ENCODE measurements at regions of chr22 and their contacts with region 1.

Region 1: DNA sequence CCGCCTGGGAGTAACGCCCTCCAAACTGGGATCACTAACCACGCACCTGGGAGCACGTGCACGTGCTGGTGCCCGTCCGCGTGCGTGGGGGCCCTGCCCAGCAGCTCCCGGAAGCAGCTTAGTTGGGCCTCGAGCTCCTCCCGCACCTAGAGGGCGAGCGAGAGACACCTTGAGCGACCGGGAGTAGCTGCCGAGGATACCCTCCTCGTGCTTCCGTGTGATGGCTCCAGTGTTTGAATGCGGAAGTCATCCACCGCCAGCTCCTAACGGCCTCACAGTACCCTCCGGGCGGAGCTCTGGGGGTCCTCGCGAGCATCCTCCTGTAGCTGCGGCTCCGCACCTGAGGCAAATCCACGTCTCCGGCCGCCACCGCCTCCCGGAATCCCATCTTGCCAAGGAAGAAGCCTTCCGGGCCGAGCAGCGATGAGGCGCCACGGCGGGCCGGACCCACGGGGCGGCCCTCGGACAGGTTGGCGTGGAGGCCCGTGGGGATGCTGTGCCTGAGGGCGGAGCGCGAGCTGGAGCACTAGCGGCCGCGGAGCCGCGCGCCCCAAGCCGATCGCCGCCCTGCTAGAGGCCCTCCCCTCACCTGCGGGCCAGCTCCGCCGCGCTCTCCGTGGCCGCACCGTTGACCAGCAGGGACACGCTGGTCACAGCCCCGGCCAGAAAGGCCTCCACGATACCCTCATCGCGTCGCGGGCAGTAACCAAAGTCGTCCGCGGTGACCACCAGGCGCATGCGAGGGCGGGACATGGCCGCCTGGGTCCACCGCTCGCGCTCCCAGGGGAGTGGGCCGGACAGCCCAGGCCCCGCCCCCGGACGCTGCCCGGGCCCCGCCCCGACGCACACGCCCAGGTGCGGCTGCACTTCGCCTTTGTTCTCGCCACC is at the start of gene YDJC:
- DNase-seq: peak; percentile 95
- ATAC-seq: peak; percentile 85
- H3K4me3 Mint-ChIP-seq: peak within 1 kb of the TSS; percentile 91
- H3K27ac Mint-ChIP-seq: peak within 1 kb of the TSS; percentile 92
- H3K4me1 Mint-ChIP-seq: peaks cover 48% of the 10 kb centered on the region
- H3K27me3 Mint-ChIP-seq: no peaks in the 10 kb centered on the region
- CTCF ChIP-seq: peak; percentile 31
- total RNA-seq, gene YDJC: 46.1 and 51.4 TPM in 2 replicates

Region 2: GRCh38 chr22:21001560-21002325 is 627.8 kb before region 1 on chr22 and contains the start of gene THAP7:
- CTCF ChIA-PET with region 1: no interaction called
- POLR2A ChIA-PET with region 1: interaction called, 4 read pairs
- intact Hi-C with region 1: loop called (anchors 1 kb)
- DNase-seq: peak; percentile 97
- ATAC-seq: peak; percentile 88
- H3K4me3 Mint-ChIP-seq: peak within 1 kb of the TSS; percentile 93
- H3K27ac Mint-ChIP-seq: peak within 1 kb of the TSS; percentile 98
- H3K4me1 Mint-ChIP-seq: peaks cover 26% of the 10 kb centered on the region
- H3K27me3 Mint-ChIP-seq: no peaks in the 10 kb centered on the region
- CTCF ChIP-seq: no peak
- total RNA-seq, gene THAP7: 27.1 and 32.3 TPM in 2 replicates

Region 3: GRCh38 chr22:21587803-21588611 is 41.5 kb before region 1 on chr22:
- CTCF ChIA-PET with region 1: interaction called, 5 read pairs
- POLR2A ChIA-PET with region 1: interaction called, 22 read pairs
- intact Hi-C with region 1: loop called (anchors 1 kb)
- DNase-seq: peak; percentile 27
- ATAC-seq: peak; percentile 88
- H3K4me3 Mint-ChIP-seq: peak overlapping the region; percentile 45
- H3K27ac Mint-ChIP-seq: peak overlapping the region; percentile 83
- H3K4me1 Mint-ChIP-seq: peaks cover 66% of the 10 kb centered on the region
- H3K27me3 Mint-ChIP-seq: no peaks in the 10 kb centered on the region
- CTCF ChIP-seq: no peak

Region 4: GRCh38 chr22:21641789-21642583 is 12.5 kb after region 1 on chr22 and contains the start of gene SDF2L1:
- CTCF ChIA-PET with region 1: interaction called, 65 read pairs
- POLR2A ChIA-PET with region 1: interaction called, 110 read pairs
- intact Hi-C with region 1: loop called (anchors 1 kb)
- DNase-seq: peak; percentile 95
- ATAC-seq: peak; percentile 95
- H3K4me3 Mint-ChIP-seq: peak within 1 kb of the TSS; percentile 89
- H3K27ac Mint-ChIP-seq: peak within 1 kb of the TSS; percentile 88
- H3K4me1 Mint-ChIP-seq: peaks cover 27% of the 10 kb centered on the region
- H3K27me3 Mint-ChIP-seq: no peaks in the 10 kb centered on the region
- CTCF ChIP-seq: no peak
- total RNA-seq, gene SDF2L1: 40.0 and 43.3 TPM in 2 replicates

Region 5: GRCh38 chr22:21666786-21667185 is 37.3 kb after region 1 on chr22:
- CTCF ChIA-PET with region 1: interaction called, 10 read pairs
- POLR2A ChIA-PET with region 1: interaction called, 20 read pairs
- intact Hi-C with region 1: loop called (anchors 1 kb)
- DNase-seq: no peak
- ATAC-seq: no peak
- H3K4me3 Mint-ChIP-seq: peak overlapping the region; percentile 99
- H3K27ac Mint-ChIP-seq: peak overlapping the region; percentile 50
- H3K4me1 Mint-ChIP-seq: peaks cover 25% of the 10 kb centered on the region
- H3K27me3 Mint-ChIP-seq: no peaks in the 10 kb centered on the region
- CTCF ChIP-seq: no peak

Region 6: DNA sequence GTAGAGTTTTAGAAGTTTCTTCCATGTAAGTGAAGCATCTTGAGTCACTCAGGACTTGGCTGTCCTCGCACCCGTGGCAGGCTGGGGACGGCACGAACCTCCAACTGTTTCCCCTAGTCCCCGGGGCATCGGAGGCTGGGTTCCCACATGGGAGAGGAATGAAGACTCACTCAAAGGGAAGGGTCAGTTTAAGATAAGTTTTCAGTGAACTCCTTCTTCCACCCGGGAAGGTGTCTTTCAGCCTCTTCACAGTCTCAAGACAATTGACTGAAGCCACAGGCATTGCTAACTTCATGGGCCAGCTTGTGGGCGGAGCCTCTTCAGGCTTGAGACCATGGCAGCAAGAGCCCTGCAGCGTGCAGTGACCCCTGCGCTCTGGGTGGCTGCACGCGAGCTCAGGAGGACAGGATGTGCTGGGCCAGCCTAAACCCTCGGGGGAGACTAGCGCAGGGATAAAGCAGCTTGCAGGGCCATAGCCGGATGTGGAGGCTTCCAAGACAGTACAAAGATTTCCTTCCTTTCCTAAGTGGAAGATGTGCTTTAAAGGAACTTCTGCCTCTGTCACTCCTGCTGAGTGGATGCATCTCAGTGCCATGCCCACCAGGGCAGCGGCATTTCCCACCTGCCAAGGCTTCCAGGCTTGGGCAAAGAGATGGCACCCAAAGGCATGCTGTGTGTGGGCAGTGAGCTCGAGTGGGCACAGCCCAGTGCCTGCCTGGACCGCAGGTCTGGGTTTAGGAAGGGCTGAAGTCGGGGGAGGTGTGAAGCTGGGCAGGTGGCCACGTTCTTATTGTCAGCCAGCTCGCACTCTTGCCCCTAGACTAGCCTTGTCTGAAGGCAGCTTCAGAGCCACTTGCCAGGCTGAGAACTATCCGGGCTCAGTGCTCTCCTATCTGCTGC is 69.2 kb after region 1 on chr22:
- CTCF ChIA-PET with region 1: no interaction called
- POLR2A ChIA-PET with region 1: no interaction called
- intact Hi-C with region 1: no loop called
- DNase-seq: no peak
- ATAC-seq: no peak
- H3K4me3 Mint-ChIP-seq: no peak overlapping the region
- H3K27ac Mint-ChIP-seq: no peak overlapping the region
- H3K4me1 Mint-ChIP-seq: no peaks in the 10 kb centered on the region
- H3K27me3 Mint-ChIP-seq: no peaks in the 10 kb centered on the region
- CTCF ChIP-seq: no peak

Region 7: GRCh38 chr22:22753526-22754267 is 1124.2 kb after region 1 on chr22:
- CTCF ChIA-PET with region 1: no interaction called
- POLR2A ChIA-PET with region 1: no interaction called
- intact Hi-C with region 1: no loop called
- DNase-seq: peak; percentile 55
- ATAC-seq: peak; percentile 89
- H3K4me3 Mint-ChIP-seq: no peak overlapping the region
- H3K27ac Mint-ChIP-seq: peak overlapping the region; percentile 24
- H3K4me1 Mint-ChIP-seq: peaks cover 26% of the 10 kb centered on the region
- H3K27me3 Mint-ChIP-seq: no peaks in the 10 kb centered on the region
- CTCF ChIP-seq: no peak

Measured in activated B cell treated with CpG ODN at 0.5 μM for 24 hours (primary cell).